ENCODE measurements at regions of chr20 and their contacts with region 1.

Region 1: GRCh38 chr20:33299111-33299603 is 16.1 kb downstream of the BPIFB1 start:
- DNase-seq: peak; percentile 59 to 75 (median 73)
- ATAC-seq: peak; percentile 77
- H3K4me3 ChIP-seq: no peak overlapping the region
- H3K4me1 ChIP-seq: no peaks in the 10 kb centered on the region
- CTCF ChIP-seq: peak; percentile 89

Region 2: GRCh38 chr20:32902456-32903420 is 396.4 kb before region 1 on chr20:
- intact Hi-C with region 1: loop called (anchors 5 to 10 kb)
- DNase-seq: peak; percentile 46 to 65 (median 62)
- ATAC-seq: peak; percentile 83
- H3K4me3 ChIP-seq: no peak overlapping the region
- H3K4me1 ChIP-seq: no peaks in the 10 kb centered on the region
- CTCF ChIP-seq: peak; percentile 81

Measured in mucosa of descending colon (tissue), 3 donors.